ENCODE measurements at regions of chr4 and their contacts with region 1.

Region 1: GRCh38 chr4:68349649-68350360 is at the start of gene YTHDC1:
- DNase-seq: peak; percentile 99
- H3K4me3 ChIP-seq: peak within 1 kb of the TSS; percentile 96
- H3K27ac ChIP-seq: peak within 1 kb of the TSS; percentile 97
- H3K4me1 ChIP-seq: peaks cover 16% of the 10 kb centered on the region
- H3K27me3 ChIP-seq: no peaks in the 10 kb centered on the region
- total RNA-seq, gene YTHDC1: 38.0 and 41.4 TPM in 2 replicates

Region 2: DNA sequence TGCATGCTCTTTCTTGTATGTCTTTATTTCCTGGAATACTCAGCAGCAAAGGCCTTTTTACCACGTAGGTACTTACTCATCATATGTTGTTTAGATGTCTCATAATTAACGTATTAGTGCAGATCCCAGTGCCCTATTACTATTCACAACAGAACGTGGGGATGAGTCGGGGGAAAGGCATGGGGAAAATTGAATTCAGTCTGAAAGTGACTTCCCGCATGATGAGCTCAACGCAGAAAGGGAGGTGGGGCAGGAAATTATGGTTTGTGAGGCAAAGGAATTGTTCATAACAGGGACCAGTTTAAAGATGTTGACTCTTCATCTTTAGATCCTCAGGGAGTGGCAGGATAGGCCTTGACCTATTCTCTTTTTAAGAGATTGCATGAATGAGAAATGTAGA is 464.0 kb before region 1 on chr4:
- in situ Hi-C with region 1: loop called (anchors 25 kb)
- DNase-seq: peak; percentile 96
- H3K4me3 ChIP-seq: peak overlapping the region; percentile 24
- H3K27ac ChIP-seq: peak overlapping the region; percentile 93
- H3K4me1 ChIP-seq: peaks cover 24% of the 10 kb centered on the region
- H3K27me3 ChIP-seq: no peaks in the 10 kb centered on the region